Right ventricle myocardium inferior (tissue), 1 donor: ENCODE measurements at regions of chr11 and their contacts with region 1.

Region 1: GRCh38 chr11:69050592-69051380 is 2.1 kb downstream of the TPCN2 start:
- DNase-seq: peak; percentile 45
- ATAC-seq: no peak

Region 2: DNA sequence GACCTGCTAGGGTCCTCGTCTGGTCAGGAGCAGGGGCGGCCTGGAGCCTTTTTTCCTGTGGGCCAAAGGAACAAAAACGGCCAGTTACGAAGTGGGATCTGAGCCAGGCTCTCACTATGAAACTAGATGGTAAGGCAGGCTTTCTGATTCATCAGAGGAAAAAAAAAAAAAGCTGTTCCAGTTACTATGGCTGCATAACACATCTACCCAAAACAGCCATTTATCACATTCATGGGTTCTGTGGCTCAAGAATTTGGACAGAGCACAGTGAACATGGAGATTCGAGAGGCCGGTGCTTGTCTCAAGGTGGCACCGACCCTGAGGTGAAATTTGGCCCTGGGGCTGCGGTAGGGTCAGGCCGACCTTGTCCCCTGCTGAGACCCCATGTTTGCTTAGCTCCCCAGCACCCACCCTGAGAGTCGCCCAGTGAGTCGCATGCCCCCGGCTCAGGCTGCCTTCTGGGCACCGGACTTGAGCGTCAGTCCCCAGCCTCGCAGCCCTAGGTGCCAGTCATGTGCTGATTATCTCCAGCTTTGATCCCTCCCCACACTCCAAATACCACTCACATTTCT is 104.2 kb before region 1 on chr11:
- intact Hi-C with region 1: loop called (anchors 5 kb)
- DNase-seq: no peak
- ATAC-seq: peak; percentile 52

Region 3: GRCh38 chr11:69088676-69089146 is 37.9 kb after region 1 on chr11:
- intact Hi-C with region 1: loop called (anchors 5 kb)
- DNase-seq: no peak
- ATAC-seq: peak; percentile 72